ENCODE measurements at regions of chr11 and their contacts with region 1.

Region 1: GRCh38 chr11:64723117-64723906 is at the start of gene NRXN2:
- DNase-seq: peak; percentile 77
- H3K4me3 ChIP-seq: peak within 1 kb of the TSS; percentile 55 to 85 (median 57)
- H3K27ac ChIP-seq: no peak within 1 kb of the TSS
- H3K4me1 ChIP-seq: peaks cover 8% of the 10 kb centered on the region
- H3K27me3 ChIP-seq: no peaks in the 10 kb centered on the region
- CTCF ChIP-seq: peak; percentile 80 to 95
- total RNA-seq, gene NRXN2: 4.5 to 18.8 TPM

Region 2: GRCh38 chr11:64489831-64490441 is 233.4 kb before region 1 on chr11:
- CTCF ChIA-PET with region 1: no interaction called
- dilution Hi-C with region 1: no loop called
- in situ Hi-C with region 1: no loop called
- intact Hi-C with region 1: loop called (anchors 1 kb)
- DNase-seq: peak; percentile 27
- H3K4me3 ChIP-seq: no peak overlapping the region
- H3K27ac ChIP-seq: no peak overlapping the region
- H3K4me1 ChIP-seq: no peaks in the 10 kb centered on the region
- H3K27me3 ChIP-seq: peaks cover 2% of the 10 kb centered on the region
- CTCF ChIP-seq: peak; percentile 69 to 95

Region 3: DNA sequence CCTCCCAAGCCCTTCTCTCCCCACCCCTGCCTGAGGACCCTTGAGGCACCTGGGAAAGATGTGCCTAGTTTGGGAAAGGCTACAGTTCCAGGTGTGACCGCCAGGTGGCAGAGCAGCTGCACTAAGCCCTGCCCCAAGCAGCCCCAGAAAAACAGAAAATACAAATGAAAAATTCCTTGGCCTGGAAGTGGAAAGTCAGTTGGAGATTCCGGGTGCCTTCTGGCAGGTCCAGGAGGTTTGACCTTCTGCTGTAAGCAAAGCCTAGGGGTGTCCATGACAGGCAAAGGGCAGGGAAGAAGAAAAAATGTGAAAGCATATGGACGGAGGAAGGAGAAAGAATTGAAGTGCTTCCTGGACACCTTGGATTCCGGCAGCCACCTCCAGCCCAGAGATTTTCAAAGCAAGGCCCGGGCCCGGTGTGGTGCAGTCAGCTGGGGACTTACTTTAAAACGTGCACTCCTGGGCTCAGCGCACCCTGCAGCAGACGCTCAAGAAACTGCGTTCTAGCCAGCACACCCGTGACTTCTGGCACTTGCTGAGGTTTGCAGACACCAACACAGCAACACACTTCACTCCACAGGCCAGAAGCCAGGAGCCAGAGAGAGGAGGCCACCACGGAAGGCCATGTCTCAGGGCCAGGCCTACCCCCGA is 169.6 kb before region 1 on chr11:
- CTCF ChIA-PET with region 1: no interaction called
- dilution Hi-C with region 1: no loop called
- in situ Hi-C with region 1: no loop called
- intact Hi-C with region 1: loop called (anchors 5 kb)
- DNase-seq: no peak
- H3K4me3 ChIP-seq: no peak overlapping the region
- H3K27ac ChIP-seq: no peak overlapping the region
- H3K4me1 ChIP-seq: no peaks in the 10 kb centered on the region
- H3K27me3 ChIP-seq: no peaks in the 10 kb centered on the region
- CTCF ChIP-seq: peak; percentile 91 to 97

Region 4: DNA sequence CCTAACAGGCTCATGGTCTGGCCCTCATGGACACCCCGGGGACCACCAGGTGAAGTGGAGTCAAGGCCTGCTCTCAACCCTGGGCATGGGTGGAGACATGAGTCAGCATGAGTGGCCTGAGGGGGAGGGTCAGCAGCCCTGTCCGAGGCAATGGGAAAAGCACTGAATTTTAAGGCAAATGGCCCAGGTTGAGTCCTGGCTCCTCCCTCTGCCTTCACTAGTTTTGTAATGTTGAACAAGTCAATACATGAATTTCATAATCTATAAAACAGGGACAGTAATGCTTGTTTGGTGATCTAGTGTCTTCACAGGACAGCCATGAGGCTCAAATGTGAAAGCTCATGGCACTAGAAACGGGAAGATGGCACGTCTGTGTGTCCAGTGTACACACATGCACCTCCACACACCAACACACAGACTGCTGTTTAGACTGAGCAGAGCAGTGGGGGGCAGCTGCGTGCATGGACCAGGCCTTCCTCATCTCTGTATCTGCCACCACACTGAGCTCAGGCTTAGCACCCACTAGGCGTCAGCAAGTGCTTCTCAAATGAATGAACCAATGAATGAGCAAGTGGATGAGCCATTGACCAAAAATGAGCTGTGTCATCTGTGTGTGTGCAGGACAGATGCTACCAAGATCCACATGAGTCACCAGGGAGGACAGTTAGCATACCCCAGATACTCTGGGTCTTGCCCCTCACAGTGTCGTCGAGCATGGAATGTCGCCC is 63.7 kb before region 1 on chr11:
- CTCF ChIA-PET with region 1: no interaction called
- dilution Hi-C with region 1: no loop called
- in situ Hi-C with region 1: no loop called
- intact Hi-C with region 1: loop called (anchors 1 kb)
- DNase-seq: peak; percentile 88
- H3K4me3 ChIP-seq: no peak overlapping the region
- H3K27ac ChIP-seq: peak overlapping the region; percentile 57
- H3K4me1 ChIP-seq: peaks cover 26% of the 10 kb centered on the region
- H3K27me3 ChIP-seq: no peaks in the 10 kb centered on the region
- CTCF ChIP-seq: peak in 1 of 2 donors; percentile 50

Measured in mammary epithelial cell (primary cell).